ENCODE measurements at regions of chr1 and their contacts with region 1.

Region 1: GRCh38 chr1:147892731-147893214 is 9.8 kb upstream of the GJA8 start:
- DNase-seq: peak in 22 of 35 experiments; percentile 6 to 65 (median 12)
- ATAC-seq: peak in 1 of 4 experiments; percentile 56
- H3K4me3 ChIP-seq: no peak overlapping the region
- H3K4me3 Mint-ChIP-seq: no peak overlapping the region
- H3K27ac ChIP-seq: no peak overlapping the region
- H3K27ac Mint-ChIP-seq: no peak overlapping the region
- H3K4me1 ChIP-seq: no peaks in the 10 kb centered on the region
- H3K4me1 Mint-ChIP-seq: peaks cover 3 to 12% (median 4%) of the 10 kb centered on the region in 3 donors
- H3K27me3 ChIP-seq: no peaks in the 10 kb centered on the region
- H3K27me3 Mint-ChIP-seq: peaks cover 0 to 4% of the 10 kb centered on the region in 2 donors

Region 2: DNA sequence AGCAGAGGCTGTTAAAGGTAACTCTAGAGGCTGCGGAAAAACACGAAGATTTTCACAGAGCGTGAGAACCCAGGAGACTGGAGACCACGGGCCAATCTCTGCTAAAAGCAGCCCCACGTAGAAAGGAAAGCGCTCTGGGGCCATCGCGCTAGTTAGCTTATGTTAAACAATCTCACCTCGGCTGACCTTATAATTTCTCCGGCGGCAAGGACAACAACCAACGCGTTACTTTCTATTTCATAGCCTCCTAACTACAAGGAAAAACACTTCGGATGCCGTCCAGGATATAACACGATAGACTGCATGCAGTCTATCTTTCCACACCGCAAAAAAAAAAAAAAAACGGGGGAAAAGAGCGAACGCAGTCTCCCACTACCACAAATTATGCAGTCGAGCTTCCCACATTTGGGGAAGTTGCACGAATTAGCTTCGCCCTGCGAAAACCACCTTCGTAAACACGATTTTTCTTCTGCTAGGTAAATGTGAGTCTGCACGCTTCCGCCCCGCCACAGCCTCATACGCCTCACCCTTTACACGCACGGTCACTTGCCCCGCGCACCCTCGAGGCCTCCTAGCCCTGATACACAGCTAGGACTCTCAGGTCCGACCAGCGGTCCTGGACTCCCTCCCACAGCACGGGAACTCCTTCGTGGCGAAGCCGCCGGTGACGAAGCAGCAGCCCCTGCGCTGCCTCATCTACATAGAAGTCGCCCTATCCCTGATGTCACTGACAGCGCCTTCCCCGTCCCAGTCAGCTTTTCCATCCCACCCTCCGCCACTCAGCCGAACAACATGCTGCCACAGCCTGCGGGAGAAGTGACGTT is 808.3 kb before region 1 on chr1:
- CTCF ChIA-PET with region 1: no interaction called
- POLR2A ChIA-PET with region 1: no interaction called
- DNase-seq: peak in 30 of 35 experiments; percentile 11 to 80 (median 51)
- ATAC-seq: peak; percentile 65 to 81 (median 80)
- H3K4me3 ChIP-seq: peak overlapping the region; percentile 71 to 76
- H3K4me3 Mint-ChIP-seq: peak overlapping the region; percentile 89 to 91 (median 89)
- H3K27ac ChIP-seq: peak overlapping the region; percentile 88
- H3K27ac Mint-ChIP-seq: peak overlapping the region; percentile 96 to 100
- H3K4me1 ChIP-seq: peaks cover 0 to 33% of the 10 kb centered on the region in 2 experiments
- H3K4me1 Mint-ChIP-seq: peaks cover 36 to 37% (median 37%) of the 10 kb centered on the region in 3 donors
- H3K27me3 ChIP-seq: peaks cover 8 to 41% of the 10 kb centered on the region in 2 experiments
- H3K27me3 Mint-ChIP-seq: peaks cover 40 to 58% of the 10 kb centered on the region in 2 donors

Region 3: DNA sequence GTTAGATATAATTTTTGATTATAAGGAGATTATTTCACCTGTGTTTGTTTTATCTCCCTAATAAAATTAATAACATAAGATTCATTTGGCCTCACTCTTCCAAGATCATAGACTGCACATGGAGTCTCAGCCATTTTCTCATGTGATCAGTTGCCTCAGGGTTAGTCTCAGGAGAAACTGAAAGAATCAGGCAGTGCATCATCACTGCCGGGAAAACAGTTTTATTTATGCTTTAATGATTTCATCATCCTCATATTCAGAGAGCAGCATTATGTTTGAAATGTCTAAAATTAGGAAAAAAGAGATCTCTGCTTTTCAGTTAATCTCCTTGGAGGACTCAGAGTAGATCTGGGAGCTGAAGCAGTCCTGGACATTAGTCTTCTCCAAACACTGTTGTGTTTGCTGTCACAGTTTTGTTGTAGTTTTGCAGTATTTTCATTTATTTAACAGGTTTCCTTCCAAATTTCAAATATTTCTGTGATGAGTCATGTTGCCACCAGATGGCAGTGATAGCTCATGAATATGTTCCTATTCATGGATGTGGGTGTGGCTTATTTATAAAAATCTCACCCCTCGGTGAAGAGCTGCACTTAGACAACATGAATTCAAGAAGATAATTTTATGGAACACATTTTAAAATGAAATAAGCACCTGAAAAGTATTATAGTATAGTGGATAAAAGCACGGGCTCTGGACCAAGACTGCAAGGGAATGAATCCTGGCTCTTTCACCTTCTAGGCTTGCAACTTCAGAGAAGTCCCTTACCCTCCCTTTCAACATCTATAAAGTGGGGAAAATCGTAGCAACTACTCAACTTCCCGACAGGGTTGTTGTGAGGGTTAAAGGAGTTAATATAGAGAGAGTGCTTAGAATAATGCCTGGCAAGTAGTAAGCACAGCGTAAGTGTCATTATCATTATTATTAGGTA is 619.1 kb before region 1 on chr1:
- CTCF ChIA-PET with region 1: interaction called, 4 to 31 read pairs
- POLR2A ChIA-PET with region 1: no interaction called
- DNase-seq: peak in 17 of 35 experiments; percentile 0 to 68 (median 8)
- ATAC-seq: peak in 2 of 4 experiments; percentile 42 to 59
- H3K4me3 ChIP-seq: no peak overlapping the region
- H3K4me3 Mint-ChIP-seq: no peak overlapping the region
- H3K27ac ChIP-seq: no peak overlapping the region
- H3K27ac Mint-ChIP-seq: no peak overlapping the region
- H3K4me1 ChIP-seq: no peaks in the 10 kb centered on the region
- H3K4me1 Mint-ChIP-seq: peaks cover 0 to 6% (median 6%) of the 10 kb centered on the region in 3 donors
- H3K27me3 ChIP-seq: no peaks in the 10 kb centered on the region
- H3K27me3 Mint-ChIP-seq: no peaks in the 10 kb centered on the region

Region 4: DNA sequence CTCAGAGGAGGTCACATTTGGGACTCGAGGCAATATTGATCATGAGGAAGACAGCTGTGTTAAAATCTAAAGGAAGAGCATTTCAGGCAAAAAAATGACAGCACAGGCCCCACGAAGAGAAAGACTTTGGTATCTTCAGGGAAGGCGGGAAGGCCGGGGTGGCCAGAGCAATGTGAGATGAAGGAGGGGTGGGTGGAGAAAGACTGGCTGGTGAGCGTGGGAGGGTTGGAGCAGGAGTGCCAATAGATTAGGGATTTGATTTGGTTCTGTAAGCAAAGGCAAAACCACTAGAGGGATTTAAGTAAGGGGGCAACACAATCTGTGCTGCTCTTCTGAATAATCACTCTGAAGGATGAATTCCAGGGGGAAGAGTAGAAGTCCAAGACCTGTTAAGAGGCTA is 399.4 kb before region 1 on chr1:
- CTCF ChIA-PET with region 1: interaction called, 6 to 10 read pairs
- POLR2A ChIA-PET with region 1: no interaction called
- DNase-seq: no peak
- ATAC-seq: no peak
- H3K4me3 ChIP-seq: no peak overlapping the region
- H3K4me3 Mint-ChIP-seq: no peak overlapping the region
- H3K27ac ChIP-seq: no peak overlapping the region
- H3K27ac Mint-ChIP-seq: no peak overlapping the region
- H3K4me1 ChIP-seq: peaks cover 0 to 4% of the 10 kb centered on the region in 2 experiments
- H3K4me1 Mint-ChIP-seq: peaks cover 0 to 2% (median 0%) of the 10 kb centered on the region in 3 donors
- H3K27me3 ChIP-seq: peaks cover 0 to 5% of the 10 kb centered on the region in 2 experiments
- H3K27me3 Mint-ChIP-seq: no peaks in the 10 kb centered on the region

Region 5: DNA sequence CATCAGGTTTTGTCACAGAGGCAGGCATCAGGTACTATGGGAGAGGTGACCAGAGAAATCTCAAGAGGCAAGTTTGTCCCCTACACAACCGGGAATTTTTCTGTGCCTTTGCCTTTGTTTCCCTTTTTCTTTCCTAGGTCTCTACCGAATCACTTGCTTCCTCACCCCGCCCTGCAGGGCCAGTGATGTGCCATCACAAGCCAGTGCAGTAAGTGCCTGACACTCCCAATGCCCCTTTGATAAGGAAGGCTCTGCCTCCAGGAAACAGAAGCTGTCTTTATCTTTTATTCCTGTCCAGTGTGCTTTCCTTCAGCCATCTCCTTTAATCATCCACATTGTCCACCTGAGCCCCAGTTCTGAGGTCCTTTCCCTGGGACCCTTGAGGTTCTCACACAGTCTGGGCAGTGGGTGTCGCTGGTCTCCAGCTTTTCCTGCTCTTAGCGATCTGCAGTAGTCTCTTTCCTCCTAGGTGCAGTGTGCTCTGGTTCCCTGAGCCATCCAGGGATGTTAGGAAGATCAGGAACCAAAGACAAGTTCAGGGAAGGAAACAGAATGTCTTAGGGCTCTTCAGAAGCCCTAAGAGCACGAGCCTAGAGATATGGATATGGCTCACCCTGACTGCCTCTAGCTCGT is 169.0 kb before region 1 on chr1:
- CTCF ChIA-PET with region 1: interaction called in 1 of 2 experiments, 16 read pairs
- POLR2A ChIA-PET with region 1: no interaction called
- DNase-seq: peak in 17 of 35 experiments; percentile 4 to 56 (median 16)
- ATAC-seq: peak in 2 of 4 experiments; percentile 39 to 58
- H3K4me3 ChIP-seq: no peak overlapping the region
- H3K4me3 Mint-ChIP-seq: no peak overlapping the region
- H3K27ac ChIP-seq: no peak overlapping the region
- H3K27ac Mint-ChIP-seq: no peak overlapping the region
- H3K4me1 ChIP-seq: no peaks in the 10 kb centered on the region
- H3K4me1 Mint-ChIP-seq: peaks cover 0 to 4% (median 3%) of the 10 kb centered on the region in 3 donors
- H3K27me3 ChIP-seq: peaks cover 0 to 10% of the 10 kb centered on the region in 2 experiments
- H3K27me3 Mint-ChIP-seq: peaks cover 7 to 18% of the 10 kb centered on the region in 2 donors

Region 6: GRCh38 chr1:147808025-147808424 is 84.7 kb before region 1 on chr1:
- CTCF ChIA-PET with region 1: no interaction called
- POLR2A ChIA-PET with region 1: no interaction called
- DNase-seq: no peak
- ATAC-seq: no peak
- H3K4me3 ChIP-seq: no peak overlapping the region
- H3K4me3 Mint-ChIP-seq: no peak overlapping the region
- H3K27ac ChIP-seq: no peak overlapping the region
- H3K27ac Mint-ChIP-seq: no peak overlapping the region
- H3K4me1 ChIP-seq: no peaks in the 10 kb centered on the region
- H3K4me1 Mint-ChIP-seq: peaks cover 0 to 4% (median 0%) of the 10 kb centered on the region in 3 donors
- H3K27me3 ChIP-seq: no peaks in the 10 kb centered on the region
- H3K27me3 Mint-ChIP-seq: peaks cover 5 to 9% of the 10 kb centered on the region in 2 donors